Heart right ventricle (tissue), 16 donors: ENCODE measurements at regions of chr19 and their contacts with region 1.

Region 1: DNA sequence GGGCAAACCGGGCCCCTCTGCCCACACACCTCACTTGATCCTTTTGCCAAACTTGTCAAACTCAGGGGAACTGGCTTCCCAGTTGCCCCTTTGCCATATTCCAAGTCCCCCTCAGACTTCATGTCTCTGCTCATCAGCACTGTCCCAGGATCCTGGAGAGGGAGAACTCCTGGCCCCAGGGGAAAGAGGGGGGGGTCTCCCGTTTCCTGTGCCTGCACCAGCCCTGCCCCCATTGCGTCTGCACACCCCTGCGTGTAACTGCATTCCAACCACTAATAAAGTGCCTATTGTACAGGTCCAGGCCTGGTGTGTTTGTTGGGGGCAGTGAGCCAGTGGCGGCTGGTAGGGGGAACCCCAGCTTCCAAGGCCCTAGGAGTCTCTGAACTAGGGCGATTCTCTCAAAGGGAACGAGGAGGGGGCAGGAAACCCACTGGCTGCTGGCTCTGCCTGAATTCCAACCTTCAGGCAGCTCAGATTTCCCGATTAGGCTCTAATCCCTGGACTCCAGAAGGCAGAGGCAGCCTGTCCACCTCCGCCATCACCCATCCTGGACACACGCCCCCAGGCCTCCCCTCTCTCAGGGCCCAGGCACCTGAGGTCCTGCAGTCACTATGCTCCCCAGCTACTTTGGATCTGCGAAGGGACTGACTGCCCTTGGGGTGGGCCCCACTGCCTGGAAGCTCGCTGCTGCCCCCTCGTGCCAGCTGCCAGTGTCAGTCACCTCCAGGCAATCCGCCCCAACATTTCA is 9.7 kb upstream of the ILF3 start:
- DNase-seq: peak; percentile 89 to 90
- ATAC-seq: peak; percentile 78 to 95 (median 91)
- H3K4me3 ChIP-seq: no peak overlapping the region
- H3K27ac ChIP-seq: peak overlapping the region; percentile 27 to 69 (median 58)
- H3K4me1 ChIP-seq: peaks cover 6 to 45% (median 27%) of the 10 kb centered on the region in 9 donors
- H3K27me3 ChIP-seq: no peaks in the 10 kb centered on the region
- CTCF ChIP-seq: peak; percentile 76 to 94 (median 88)

Region 2: DNA sequence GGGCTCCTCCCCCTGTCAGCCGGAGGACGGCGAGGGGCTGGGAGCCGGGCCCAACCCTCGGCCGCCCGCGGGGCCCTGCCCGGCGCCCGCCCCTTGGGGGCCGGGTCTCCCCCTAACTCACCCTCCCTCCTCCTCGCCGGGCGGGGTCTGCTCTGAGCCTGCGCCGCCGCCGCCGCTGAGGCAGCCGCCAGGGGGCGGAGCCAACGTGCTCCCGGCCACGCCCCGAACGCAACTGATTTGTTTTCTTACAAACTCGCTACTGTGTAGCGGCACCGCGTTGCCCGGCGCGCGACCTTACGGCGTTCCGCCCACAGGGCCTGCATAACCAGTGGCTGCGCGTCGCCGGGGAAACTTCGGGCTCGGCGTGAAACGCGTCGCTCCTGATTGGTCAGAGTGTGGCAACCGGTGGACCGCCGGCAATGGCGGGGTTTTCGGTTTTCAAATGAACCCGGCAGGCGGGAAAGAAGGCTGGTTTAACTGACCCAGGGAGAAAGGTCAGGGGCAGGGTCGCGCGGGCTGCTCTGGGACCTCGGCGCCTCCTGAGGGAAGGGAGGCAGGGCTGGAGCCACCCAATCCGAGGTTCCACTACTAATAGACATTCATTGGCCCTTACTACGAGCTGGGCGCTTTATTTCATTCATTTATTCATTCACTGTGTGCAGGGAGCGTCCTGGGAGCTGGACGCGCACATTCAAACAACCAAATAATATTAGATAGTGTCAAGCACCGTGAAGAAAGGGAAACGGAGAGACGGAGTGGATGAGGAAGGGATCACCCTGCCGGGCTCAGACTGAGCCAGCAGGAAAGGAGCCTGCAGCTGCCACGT is 75.4 kb before region 1 on chr19 and contains the start of gene CDKN2D:
- intact Hi-C with region 1: no loop called
- DNase-seq: peak; percentile 100
- ATAC-seq: peak; percentile 86 to 93 (median 90)
- H3K4me3 ChIP-seq: peak within 1 kb of the TSS; percentile 40 to 94 (median 74)
- H3K27ac ChIP-seq: peak within 1 kb of the TSS; percentile 51 to 94 (median 86)
- H3K4me1 ChIP-seq: peaks cover 4 to 52% (median 45%) of the 10 kb centered on the region in 9 donors
- H3K27me3 ChIP-seq: no peaks in the 10 kb centered on the region
- CTCF ChIP-seq: peak in 8 of 9 donors; percentile 26 to 61 (median 38)
- total RNA-seq, gene CDKN2D: 7.7 to 19.2 (median 10.3) TPM

Region 3: DNA sequence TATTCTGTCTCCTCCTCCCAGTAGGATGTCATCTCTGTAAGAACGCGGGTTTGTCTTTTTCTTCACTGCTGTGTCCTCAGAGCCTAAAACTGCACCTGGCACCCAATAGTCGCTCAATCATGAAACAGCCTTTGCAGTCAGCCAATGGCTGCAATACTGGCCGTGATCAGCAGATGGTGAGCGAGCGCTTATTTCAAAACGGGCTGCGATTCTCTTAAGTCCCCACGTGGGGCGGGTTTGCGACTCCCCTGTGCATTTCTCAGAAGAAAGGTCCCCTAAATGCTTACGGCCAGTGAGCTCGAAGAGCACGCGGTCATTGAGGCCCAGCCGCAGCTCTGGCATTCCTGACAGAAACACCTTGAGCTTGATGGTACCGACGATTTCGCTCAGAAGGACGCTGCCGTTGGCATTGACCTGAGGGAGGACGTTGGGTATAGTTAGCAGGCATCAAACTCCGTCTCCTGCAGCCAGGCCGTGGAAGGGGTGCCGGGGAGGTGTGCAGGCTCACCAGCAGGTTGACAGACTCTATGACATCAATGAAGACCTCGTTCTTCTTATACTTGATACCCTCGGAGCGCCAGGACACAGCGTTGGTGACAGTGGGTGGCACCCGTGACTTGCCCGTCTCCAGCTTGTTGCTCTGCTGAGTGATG is 63.3 kb before region 1 on chr19:
- intact Hi-C with region 1: loop called (anchors 1 to 2 kb)
- DNase-seq: peak; percentile 84 to 88
- ATAC-seq: peak; percentile 74 to 93 (median 86)
- H3K4me3 ChIP-seq: peak overlapping the region in 4 of 10 donors; percentile 11 to 26 (median 18)
- H3K27ac ChIP-seq: no peak overlapping the region
- H3K4me1 ChIP-seq: peaks cover 0 to 13% (median 0%) of the 10 kb centered on the region in 9 donors
- H3K27me3 ChIP-seq: peaks cover 0 to 5% (median 0%) of the 10 kb centered on the region in 7 donors
- CTCF ChIP-seq: peak; percentile 97 to 100 (median 98)

Region 4: GRCh38 chr19:10602330-10603083 is 41.9 kb before region 1 on chr19:
- intact Hi-C with region 1: loop called in 1 of 10 experiments (anchors 5 kb)
- DNase-seq: peak; percentile 87 to 91
- ATAC-seq: peak; percentile 91 to 98 (median 95)
- H3K4me3 ChIP-seq: peak overlapping the region; percentile 89 to 100 (median 100)
- H3K27ac ChIP-seq: peak overlapping the region; percentile 91 to 99 (median 98)
- H3K4me1 ChIP-seq: peaks cover 0 to 41% (median 36%) of the 10 kb centered on the region in 9 donors
- H3K27me3 ChIP-seq: no peaks in the 10 kb centered on the region
- CTCF ChIP-seq: no peak